Caco-2 (cell line): ENCODE measurements at regions of chr11 and their contacts with region 1.

Region 1: DNA sequence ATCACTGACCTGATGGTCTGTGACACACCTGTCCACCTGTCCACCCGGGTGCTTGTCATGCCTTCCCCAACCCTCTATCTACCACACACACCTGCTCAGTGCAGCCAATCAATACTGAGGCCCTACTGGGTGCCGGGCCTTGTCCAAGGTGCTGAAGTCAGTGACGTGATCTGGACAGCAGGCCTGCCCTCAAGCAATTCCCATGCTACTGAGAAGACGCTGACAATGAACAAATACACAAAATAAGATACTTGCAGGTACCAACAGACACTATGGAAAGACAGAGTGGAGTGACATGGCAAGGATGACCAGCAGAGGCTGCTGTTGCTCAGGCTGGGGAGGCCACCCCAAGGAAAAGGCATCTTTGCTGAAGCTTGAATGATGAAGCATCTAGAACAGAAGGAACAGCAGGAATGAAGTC is 21.2 kb downstream of the PLAAT3 start:
- DNase-seq: peak in 1 of 2 experiments; percentile 67
- H3K4me3 ChIP-seq: no peak overlapping the region
- H3K4me3 Mint-ChIP-seq: no peak overlapping the region
- H3K27ac Mint-ChIP-seq: no peak overlapping the region
- H3K4me1 ChIP-seq: no peaks in the 10 kb centered on the region
- H3K4me1 Mint-ChIP-seq: peaks cover 7% of the 10 kb centered on the region
- H3K27me3 ChIP-seq: no peaks in the 10 kb centered on the region
- H3K27me3 Mint-ChIP-seq: no peaks in the 10 kb centered on the region
- CTCF ChIP-seq: peak; percentile 72 to 95

Region 2: DNA sequence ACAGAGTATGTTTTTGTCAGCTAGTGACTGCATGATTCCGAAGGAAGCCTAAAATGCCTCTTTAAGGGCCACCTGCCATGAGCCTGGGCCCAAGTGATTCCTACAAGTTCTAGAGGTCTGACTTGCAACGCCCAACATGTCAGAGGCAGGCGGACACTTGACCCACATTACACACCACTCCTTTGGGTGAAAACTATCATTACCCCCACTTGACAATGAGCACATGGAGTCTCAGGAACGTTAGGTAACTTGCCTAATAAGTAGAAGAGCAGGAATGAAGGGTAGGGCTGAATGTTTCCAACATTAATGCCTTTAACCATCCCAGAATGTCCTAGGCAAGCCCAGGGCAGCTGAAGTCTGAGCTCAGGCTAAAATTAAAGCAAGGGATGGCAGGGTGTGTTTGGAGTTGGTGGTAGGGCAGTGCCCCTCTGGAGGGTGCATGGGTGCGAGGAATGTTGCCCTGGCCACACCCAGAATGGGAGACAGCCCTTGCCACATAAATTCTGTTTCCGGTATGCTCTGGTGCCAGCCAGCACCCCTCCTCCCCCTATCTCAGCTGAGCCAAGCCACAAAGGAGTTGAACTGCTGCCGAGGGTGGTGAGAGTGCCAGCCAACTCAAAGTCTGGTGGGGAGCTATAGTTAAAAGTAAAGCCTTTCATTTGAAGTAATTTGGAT is 32.3 kb before region 1 on chr11:
- CTCF ChIA-PET with region 1: interaction called, 10 read pairs
- POLR2A ChIA-PET with region 1: no interaction called
- intact Hi-C with region 1: no loop called
- DNase-seq: no peak
- H3K4me3 ChIP-seq: no peak overlapping the region
- H3K4me3 Mint-ChIP-seq: no peak overlapping the region
- H3K27ac Mint-ChIP-seq: no peak overlapping the region
- H3K4me1 ChIP-seq: peaks cover 21% of the 10 kb centered on the region
- H3K4me1 Mint-ChIP-seq: peaks cover 14% of the 10 kb centered on the region
- H3K27me3 ChIP-seq: no peaks in the 10 kb centered on the region
- H3K27me3 Mint-ChIP-seq: no peaks in the 10 kb centered on the region
- CTCF ChIP-seq: no peak